ENCODE measurements at regions of chr1 and their contacts with region 1.

Region 1: GRCh38 chr1:72282271-72283021 is at the start of gene NEGR1:
- DNase-seq: peak; percentile 93 to 95
- ATAC-seq: peak; percentile 93
- H3K4me3 ChIP-seq: peak within 1 kb of the TSS; percentile 37 to 81
- H3K27ac ChIP-seq: peak within 1 kb of the TSS; percentile 87 to 95
- H3K4me1 ChIP-seq: no peaks in the 10 kb centered on the region
- H3K27me3 ChIP-seq: no peaks in the 10 kb centered on the region
- total RNA-seq, gene NEGR1: 26.7 to 50.3 TPM

Region 2: DNA sequence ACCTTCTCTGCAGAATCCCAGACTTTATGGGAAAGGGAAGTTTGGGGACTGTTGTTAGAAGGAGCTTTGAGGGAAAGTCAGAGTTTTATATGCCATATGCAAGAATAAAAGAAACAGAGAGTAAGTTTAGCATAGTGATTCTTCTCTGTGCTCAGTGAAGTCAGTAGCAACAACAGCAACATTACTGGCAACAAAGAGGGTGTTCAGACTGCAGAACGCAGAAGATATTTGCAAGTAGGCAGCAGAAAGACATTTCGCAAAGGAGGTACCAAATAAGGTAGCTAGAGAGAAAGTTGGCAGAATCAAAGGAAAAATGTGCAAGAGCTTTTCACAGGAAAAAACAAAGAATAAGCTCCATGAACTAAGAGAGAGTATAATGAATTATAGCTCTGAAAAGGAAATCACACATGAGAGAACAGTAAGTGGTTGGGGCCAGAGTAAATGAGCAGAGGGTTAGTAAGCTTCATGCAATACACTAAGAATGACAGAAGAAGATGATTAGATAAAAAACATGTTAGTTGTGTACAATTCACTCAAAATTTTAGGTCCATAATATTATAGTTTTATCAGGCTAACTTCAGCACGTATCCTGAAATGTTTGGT is 98.2 kb before region 1 on chr1:
- intact Hi-C with region 1: loop called in 1 of 2 experiments (anchors 5 kb)
- DNase-seq: no peak
- ATAC-seq: peak; percentile 65
- H3K4me3 ChIP-seq: no peak overlapping the region
- H3K27ac ChIP-seq: peak overlapping the region in 1 of 2 donors; percentile 57
- H3K4me1 ChIP-seq: peaks cover 0 to 3% of the 10 kb centered on the region in 2 donors
- H3K27me3 ChIP-seq: no peaks in the 10 kb centered on the region

Region 3: GRCh38 chr1:72227667-72228066 is 54.8 kb before region 1 on chr1:
- intact Hi-C with region 1: loop called in 1 of 2 experiments (anchors 2 kb)
- DNase-seq: no peak
- ATAC-seq: no peak
- H3K4me3 ChIP-seq: peak overlapping the region in 1 of 2 donors; percentile 4
- H3K27ac ChIP-seq: no peak overlapping the region
- H3K4me1 ChIP-seq: no peaks in the 10 kb centered on the region
- H3K27me3 ChIP-seq: no peaks in the 10 kb centered on the region